ENCODE measurements at regions of chr3 and their contacts with region 1.

Region 1: GRCh38 chr3:112561731-112562688 is at the starts of genes ATG3 and SLC35A5:
- DNase-seq: peak; percentile 98
- H3K4me3 Mint-ChIP-seq: peak within 1 kb of the TSS; percentile 92
- H3K27ac Mint-ChIP-seq: peak within 1 kb of the TSS; percentile 99
- H3K4me1 Mint-ChIP-seq: peaks cover 49% of the 10 kb centered on the region
- H3K27me3 Mint-ChIP-seq: no peaks in the 10 kb centered on the region
- total RNA-seq, gene ATG3: 61.1 and 61.6 TPM in 2 replicates
- total RNA-seq, gene SLC35A5: 12.6 and 17.8 TPM in 2 replicates

Region 2: DNA sequence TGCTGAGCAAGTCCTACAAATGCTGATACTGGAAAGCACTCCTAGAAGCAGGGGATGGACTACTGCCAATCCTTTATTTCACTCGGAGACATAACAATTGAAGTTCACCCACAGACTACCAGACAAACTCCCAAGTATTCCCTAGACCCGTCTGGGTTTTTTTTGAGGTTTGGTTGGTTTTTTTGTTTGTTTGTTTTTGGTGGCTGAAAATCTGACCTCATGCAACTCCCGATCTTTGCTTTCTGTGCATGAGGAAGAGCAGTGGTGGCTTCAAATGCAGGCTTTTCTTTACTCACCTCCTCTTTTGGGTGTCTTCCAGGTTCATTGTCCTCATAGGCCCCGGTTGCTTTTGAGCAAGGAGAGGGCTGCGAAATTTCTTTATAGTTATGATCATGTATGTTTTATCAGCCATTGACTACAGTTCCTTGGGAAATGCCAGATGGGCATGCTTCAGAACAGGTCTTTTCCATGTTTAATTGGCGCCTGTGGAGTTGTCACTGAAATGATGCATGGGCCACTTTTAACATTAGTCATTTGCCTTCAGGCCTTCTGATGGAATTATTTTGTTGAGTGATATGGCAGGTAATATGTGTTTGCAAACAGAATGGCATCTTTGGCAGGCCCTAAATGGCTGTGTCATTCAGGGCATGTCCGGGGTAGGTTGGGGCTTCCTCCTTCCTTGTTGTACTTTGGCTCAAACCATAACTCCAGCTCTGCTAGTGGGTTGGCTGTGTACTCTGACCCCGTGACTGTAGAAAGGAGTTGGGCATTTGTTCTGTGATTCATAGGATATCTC is 885.6 kb before region 1 on chr3:
- intact Hi-C with region 1: loop called (anchors 5 kb)
- DNase-seq: no peak
- H3K4me3 Mint-ChIP-seq: peak overlapping the region; percentile 96
- H3K27ac Mint-ChIP-seq: peak overlapping the region; percentile 99
- H3K4me1 Mint-ChIP-seq: peaks cover 61% of the 10 kb centered on the region
- H3K27me3 Mint-ChIP-seq: no peaks in the 10 kb centered on the region

Region 3: DNA sequence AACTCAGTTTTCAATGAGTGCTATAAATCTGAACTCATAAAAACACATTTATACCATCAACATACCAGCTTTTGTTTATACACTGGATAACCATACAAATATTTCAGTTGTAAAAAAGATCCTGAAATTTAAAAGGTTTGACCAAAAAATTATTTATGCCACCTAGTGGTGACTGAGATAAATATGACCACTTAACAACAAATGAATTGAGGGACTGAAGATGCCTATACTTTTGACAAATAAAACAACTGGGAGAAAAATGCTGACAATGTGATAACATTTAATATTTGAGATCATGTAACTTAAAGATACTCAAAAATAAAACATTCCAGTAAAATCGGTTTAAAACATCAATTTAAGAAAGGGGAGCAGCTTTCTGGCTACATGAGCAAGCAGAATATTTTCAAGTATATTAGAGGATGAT is 30.6 kb before region 1 on chr3:
- intact Hi-C with region 1: loop called (anchors 2 kb)
- DNase-seq: no peak
- H3K4me3 Mint-ChIP-seq: no peak overlapping the region
- H3K27ac Mint-ChIP-seq: no peak overlapping the region
- H3K4me1 Mint-ChIP-seq: peaks cover 4% of the 10 kb centered on the region
- H3K27me3 Mint-ChIP-seq: no peaks in the 10 kb centered on the region

Region 4: GRCh38 chr3:112966633-112967032 is 404.6 kb after region 1 on chr3:
- intact Hi-C with region 1: no loop called
- DNase-seq: no peak
- H3K4me3 Mint-ChIP-seq: no peak overlapping the region
- H3K27ac Mint-ChIP-seq: no peak overlapping the region
- H3K4me1 Mint-ChIP-seq: peaks cover 31% of the 10 kb centered on the region
- H3K27me3 Mint-ChIP-seq: no peaks in the 10 kb centered on the region

Measured in activated T-helper 2 cell treated with anti-CD3 and anti-CD28 coated beads, Interferon-gamma antibody, Interleukin-2, Interleukin-4, amounts not matched to agents 10 μg/mL and 5 μg/mL and 100 μg/mL, durations not matched to agents 14 hours and 24 hours and 36 hours (primary cell).